ENCODE measurements at regions of chr4 and their contacts with region 1.

Region 1: GRCh38 chr4:112704991-112705845 is 68.3 kb downstream of the LARP7 start:
- DNase-seq: peak; percentile 80

Region 2: DNA sequence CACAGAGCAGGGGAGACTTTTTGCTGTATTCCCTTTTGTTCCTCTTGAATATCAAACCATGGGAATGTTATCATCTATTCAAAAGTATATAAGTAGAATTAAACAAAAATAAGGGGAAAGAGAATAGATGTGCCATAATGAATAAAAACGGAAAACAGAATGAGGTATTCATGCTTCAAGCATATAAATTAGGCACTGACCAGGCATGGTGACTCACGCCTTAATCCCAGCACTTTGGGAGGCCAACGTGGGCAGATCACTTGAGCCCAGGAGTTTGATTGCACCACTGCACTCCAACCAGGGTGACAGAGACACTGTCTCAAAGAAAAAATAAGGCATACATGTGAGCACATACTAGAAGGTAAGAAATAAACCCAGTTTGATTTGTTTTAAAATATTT is 173.0 kb before region 1 on chr4:
- intact Hi-C with region 1: no loop called
- DNase-seq: no peak

Region 3: GRCh38 chr4:112585977-112586736 is 119.1 kb before region 1 on chr4:
- intact Hi-C with region 1: no loop called
- DNase-seq: no peak

Region 4: GRCh38 chr4:112674376-112674775 is 30.8 kb before region 1 on chr4:
- intact Hi-C with region 1: loop called (anchors 5 kb)
- DNase-seq: no peak

Region 5: GRCh38 chr4:112775801-112776200 is 70.6 kb after region 1 on chr4:
- intact Hi-C with region 1: no loop called
- DNase-seq: no peak

Measured in cardiac septum (tissue), 1 donor.